ENCODE measurements at regions of chr7 and their contacts with region 1.

Region 1: GRCh38 chr7:122310119-122311021 is 5.8 kb upstream of the FEZF1 start:
- DNase-seq: no peak
- H3K4me3 Mint-ChIP-seq: no peak overlapping the region
- H3K27ac Mint-ChIP-seq: no peak overlapping the region
- H3K4me1 Mint-ChIP-seq: no peaks in the 10 kb centered on the region
- H3K27me3 Mint-ChIP-seq: peaks cover 75% of the 10 kb centered on the region

Region 2: GRCh38 chr7:122886357-122887081 is 576.1 kb after region 1 on chr7 and contains the start of gene CADPS2:
- intact Hi-C with region 1: loop called (anchors 5 kb)
- DNase-seq: peak; percentile 73
- H3K4me3 Mint-ChIP-seq: peak within 1 kb of the TSS; percentile 62
- H3K27ac Mint-ChIP-seq: no peak within 1 kb of the TSS
- H3K4me1 Mint-ChIP-seq: peaks cover 5% of the 10 kb centered on the region
- H3K27me3 Mint-ChIP-seq: peaks cover 54% of the 10 kb centered on the region
- total RNA-seq, gene CADPS2: not detected in 2 replicates